Activated CD8-positive, alpha-beta T cell treated with anti-CD3 and anti-CD28 coated beads, Interleukin-2, amount 10 ng/mL, durations not matched to agents 7 days and 5 days (primary cell): ENCODE measurements at regions of chr17 and their contacts with region 1.

Region 1: GRCh38 chr17:79839363-79840268 is at the start of gene CBX4:
- DNase-seq: peak; percentile 94
- ATAC-seq: peak; percentile 73
- H3K4me3 Mint-ChIP-seq: peak within 1 kb of the TSS; percentile 97
- H3K27ac Mint-ChIP-seq: peak within 1 kb of the TSS; percentile 99
- H3K4me1 Mint-ChIP-seq: peaks cover 49% of the 10 kb centered on the region
- H3K27me3 Mint-ChIP-seq: peaks cover 30% of the 10 kb centered on the region
- total RNA-seq, gene CBX4: 50.3 to 57.2 TPM

Region 2: GRCh38 chr17:79549141-79549915 is 290.3 kb before region 1 on chr17:
- CTCF ChIA-PET with region 1: no interaction called
- POLR2A ChIA-PET with region 1: no interaction called
- DNase-seq: no peak
- ATAC-seq: no peak
- H3K4me3 Mint-ChIP-seq: no peak overlapping the region
- H3K27ac Mint-ChIP-seq: no peak overlapping the region
- H3K4me1 Mint-ChIP-seq: no peaks in the 10 kb centered on the region
- H3K27me3 Mint-ChIP-seq: peaks cover 2% of the 10 kb centered on the region

Region 3: GRCh38 chr17:79796763-79797491 is 42.7 kb before region 1 on chr17 and contains the start of gene CBX8:
- CTCF ChIA-PET with region 1: interaction called, 10 read pairs
- POLR2A ChIA-PET with region 1: interaction called, 19 read pairs
- DNase-seq: peak; percentile 100
- ATAC-seq: peak; percentile 91
- H3K4me3 Mint-ChIP-seq: peak within 1 kb of the TSS; percentile 84
- H3K27ac Mint-ChIP-seq: peak within 1 kb of the TSS; percentile 88
- H3K4me1 Mint-ChIP-seq: peaks cover 41% of the 10 kb centered on the region
- H3K27me3 Mint-ChIP-seq: peaks cover 44% of the 10 kb centered on the region
- total RNA-seq, gene CBX8: 8.6 to 9.4 TPM

Region 4: GRCh38 chr17:79810130-79811010 is 29.2 kb before region 1 on chr17:
- CTCF ChIA-PET with region 1: interaction called, 94 read pairs
- POLR2A ChIA-PET with region 1: interaction called, 13 read pairs
- DNase-seq: peak; percentile 85
- ATAC-seq: peak; percentile 94
- H3K4me3 Mint-ChIP-seq: peak overlapping the region; percentile 40
- H3K27ac Mint-ChIP-seq: no peak overlapping the region
- H3K4me1 Mint-ChIP-seq: peaks cover 42% of the 10 kb centered on the region
- H3K27me3 Mint-ChIP-seq: peaks cover 66% of the 10 kb centered on the region

Region 5: GRCh38 chr17:79826204-79826680 is 13.4 kb before region 1 on chr17:
- CTCF ChIA-PET with region 1: interaction called, 27 read pairs
- POLR2A ChIA-PET with region 1: interaction called, 6 read pairs
- DNase-seq: peak; percentile 21
- ATAC-seq: peak; percentile 25
- H3K4me3 Mint-ChIP-seq: no peak overlapping the region
- H3K27ac Mint-ChIP-seq: peak overlapping the region; percentile 46
- H3K4me1 Mint-ChIP-seq: peaks cover 51% of the 10 kb centered on the region
- H3K27me3 Mint-ChIP-seq: peaks cover 10% of the 10 kb centered on the region